IMR-90 (cell line): ENCODE measurements at regions of chr22 and their contacts with region 1.

Region 1: DNA sequence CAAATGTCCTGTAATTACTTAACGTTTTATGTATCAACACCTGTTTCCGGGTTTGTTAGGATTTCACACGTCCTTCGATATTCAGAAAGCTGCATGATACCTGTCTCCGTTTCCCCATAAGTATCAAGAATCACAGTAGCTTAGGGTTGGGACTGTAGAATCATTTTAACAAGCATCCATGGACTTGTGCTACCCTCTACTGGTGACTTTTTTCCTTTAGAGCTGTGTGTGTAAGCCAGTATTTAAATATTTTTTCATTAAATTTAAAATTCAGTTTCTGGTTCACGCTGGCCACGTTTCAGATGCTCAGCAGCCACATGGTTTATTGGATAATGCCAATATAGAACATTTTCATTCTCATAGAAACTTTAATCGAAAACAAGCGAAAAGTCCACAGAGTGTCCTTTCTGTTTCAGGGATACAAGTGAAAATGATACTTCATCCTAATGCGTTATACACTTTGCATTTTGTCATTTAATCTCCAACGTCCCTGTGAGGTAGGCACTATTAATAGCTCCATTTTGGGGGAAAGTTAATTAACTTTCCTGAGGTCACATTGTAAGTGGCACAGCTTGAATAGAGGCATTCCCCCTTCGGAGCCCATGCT is 61.5 kb upstream of the SLC25A18 start:
- DNase-seq: peak; percentile 66
- ATAC-seq: peak; percentile 93
- H3K4me3 ChIP-seq: no peak overlapping the region
- H3K27ac ChIP-seq: no peak overlapping the region
- H3K4me1 ChIP-seq: no peaks in the 10 kb centered on the region
- H3K27me3 ChIP-seq: no peaks in the 10 kb centered on the region; the same call in none of the 2 replicates
- CTCF ChIP-seq: peak; percentile 75
- POLR2A ChIP-seq: no peak
- RAD21 ChIP-seq: peak; percentile 83

Region 2: GRCh38 chr22:16917144-16918003 is 584.4 kb before region 1 on chr22:
- CTCF ChIA-PET with region 1: no interaction called
- POLR2A ChIA-PET with region 1: no interaction called
- dilution Hi-C with region 1: no loop called
- in situ Hi-C with region 1: no loop called
- intact Hi-C with region 1: loop called (anchors 2 kb)
- DNase-seq: peak; percentile 15
- ATAC-seq: peak; percentile 68
- H3K4me3 ChIP-seq: no peak overlapping the region
- H3K27ac ChIP-seq: no peak overlapping the region
- H3K4me1 ChIP-seq: no peaks in the 10 kb centered on the region
- H3K27me3 ChIP-seq: no peaks in the 10 kb centered on the region
- CTCF ChIP-seq: peak; percentile 49
- POLR2A ChIP-seq: no peak
- RAD21 ChIP-seq: peak; percentile 38

Region 3: GRCh38 chr22:17077255-17077654 is 424.5 kb before region 1 on chr22:
- CTCF ChIA-PET with region 1: interaction called, 10 read pairs
- POLR2A ChIA-PET with region 1: no interaction called
- dilution Hi-C with region 1: no loop called
- in situ Hi-C with region 1: loop called (anchors 5 kb)
- intact Hi-C with region 1: loop called (anchors 1 kb)
- DNase-seq: peak; percentile 88
- ATAC-seq: peak; percentile 83
- H3K4me3 ChIP-seq: no peak overlapping the region
- H3K27ac ChIP-seq: no peak overlapping the region
- H3K4me1 ChIP-seq: peaks cover 8% of the 10 kb centered on the region
- H3K27me3 ChIP-seq: no peaks in the 10 kb centered on the region; the same call in 1 of the 2 replicates
- CTCF ChIP-seq: no peak
- POLR2A ChIP-seq: no peak
- RAD21 ChIP-seq: no peak

Region 4: DNA sequence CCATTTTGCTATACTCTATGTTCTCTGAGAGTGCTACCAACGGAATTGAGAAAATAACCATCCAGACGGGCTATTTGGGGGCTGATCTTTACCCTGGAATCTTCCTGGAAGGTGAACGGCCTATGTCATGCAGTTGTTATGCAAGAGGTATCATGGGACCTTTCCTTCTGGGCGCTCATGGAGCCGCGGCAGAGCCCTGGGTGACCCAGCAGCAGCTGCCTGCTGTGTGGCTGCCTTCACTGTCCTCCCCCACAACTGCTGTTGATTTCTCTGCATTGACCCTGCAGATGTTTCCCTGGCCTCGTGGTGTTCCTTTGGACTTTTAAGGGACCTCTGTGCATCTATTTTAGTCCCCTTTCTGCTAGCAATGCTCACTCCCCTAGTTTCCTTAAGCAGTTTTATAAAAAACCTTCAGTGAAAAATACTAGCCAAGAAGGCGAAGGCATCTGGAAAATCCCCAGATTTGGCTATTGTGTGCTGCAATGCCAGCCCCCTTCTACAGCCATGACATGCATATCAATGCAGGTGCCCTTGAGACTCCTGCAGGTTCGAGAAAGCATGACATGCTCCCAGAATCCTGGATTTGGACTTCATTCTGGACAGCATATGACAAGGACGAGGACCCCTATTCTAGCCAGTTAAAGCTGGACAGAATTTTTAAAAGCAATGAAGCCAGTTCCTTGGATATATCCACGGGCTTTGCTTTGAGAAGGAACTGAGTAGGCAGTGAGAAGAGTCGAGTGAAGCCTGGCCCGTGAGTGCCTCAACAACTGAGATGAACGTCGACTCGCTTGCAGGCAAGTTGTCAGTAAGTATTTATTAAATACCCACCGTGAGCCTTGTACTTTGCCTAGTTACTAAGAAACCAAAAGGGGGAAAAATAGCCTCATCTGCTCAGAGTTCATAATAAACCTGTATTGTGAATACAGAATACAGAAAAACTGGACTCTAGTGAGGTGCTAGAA is 61.4 kb after region 1 on chr22 and contains the start of gene SLC25A18:
- CTCF ChIA-PET with region 1: no interaction called
- POLR2A ChIA-PET with region 1: no interaction called
- dilution Hi-C with region 1: no loop called
- in situ Hi-C with region 1: no loop called
- intact Hi-C with region 1: loop called (anchors 10 kb)
- DNase-seq: no peak
- ATAC-seq: no peak
- H3K4me3 ChIP-seq: no peak within 1 kb of the TSS
- H3K27ac ChIP-seq: no peak within 1 kb of the TSS
- H3K4me1 ChIP-seq: no peaks in the 10 kb centered on the region
- H3K27me3 ChIP-seq: peaks cover 5% of the 10 kb centered on the region
- CTCF ChIP-seq: no peak
- POLR2A ChIP-seq: no peak
- RAD21 ChIP-seq: no peak
- total RNA-seq, gene SLC25A18: under 0.01 TPM in 1 of 2 replicates, not detected in the other